ENCODE measurements at regions of chr5 and their contacts with region 1.

Region 1: GRCh38 chr5:36728697-36729543 is 122.5 kb downstream of the SLC1A3 start:
- DNase-seq: peak; percentile 67
- H3K4me3 Mint-ChIP-seq: no peak overlapping the region
- H3K27ac Mint-ChIP-seq: no peak overlapping the region
- H3K4me1 Mint-ChIP-seq: no peaks in the 10 kb centered on the region
- H3K27me3 Mint-ChIP-seq: no peaks in the 10 kb centered on the region
- CTCF ChIP-seq: peak; percentile 46

Region 2: GRCh38 chr5:36052538-36052937 is 676.4 kb before region 1 on chr5:
- CTCF ChIA-PET with region 1: no interaction called
- POLR2A ChIA-PET with region 1: no interaction called
- intact Hi-C with region 1: no loop called
- DNase-seq: no peak
- H3K4me3 Mint-ChIP-seq: no peak overlapping the region
- H3K27ac Mint-ChIP-seq: no peak overlapping the region
- H3K4me1 Mint-ChIP-seq: peaks cover 6% of the 10 kb centered on the region
- H3K27me3 Mint-ChIP-seq: peaks cover 13% of the 10 kb centered on the region
- CTCF ChIP-seq: no peak

Region 3: GRCh38 chr5:36397901-36398536 is 330.9 kb before region 1 on chr5:
- CTCF ChIA-PET with region 1: no interaction called
- POLR2A ChIA-PET with region 1: no interaction called
- intact Hi-C with region 1: no loop called
- DNase-seq: peak; percentile 47
- H3K4me3 Mint-ChIP-seq: no peak overlapping the region
- H3K27ac Mint-ChIP-seq: no peak overlapping the region
- H3K4me1 Mint-ChIP-seq: peaks cover 5% of the 10 kb centered on the region
- H3K27me3 Mint-ChIP-seq: no peaks in the 10 kb centered on the region
- CTCF ChIP-seq: peak; percentile 47

Region 4: DNA sequence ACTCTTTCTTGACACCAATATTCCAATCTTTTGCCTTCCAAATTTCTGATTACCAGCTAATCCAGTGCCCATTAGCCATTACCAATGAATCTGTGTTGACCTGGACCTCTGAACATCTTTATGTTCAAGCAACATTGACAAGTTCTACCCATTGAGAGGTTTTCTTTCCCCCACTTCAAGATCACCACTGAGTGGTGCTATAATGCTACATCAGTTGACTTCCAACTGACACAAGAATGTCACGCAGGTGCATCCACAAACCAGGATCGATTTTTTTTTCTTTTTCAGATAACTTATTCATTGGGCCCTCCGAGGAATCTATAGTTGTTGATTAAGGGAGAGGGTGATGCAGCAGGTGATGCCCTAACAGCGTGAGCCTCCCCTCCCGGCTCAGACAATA is 19.9 kb before region 1 on chr5:
- CTCF ChIA-PET with region 1: interaction called, 11 read pairs
- POLR2A ChIA-PET with region 1: no interaction called
- intact Hi-C with region 1: no loop called
- DNase-seq: no peak
- H3K4me3 Mint-ChIP-seq: no peak overlapping the region
- H3K27ac Mint-ChIP-seq: no peak overlapping the region
- H3K4me1 Mint-ChIP-seq: no peaks in the 10 kb centered on the region
- H3K27me3 Mint-ChIP-seq: no peaks in the 10 kb centered on the region
- CTCF ChIP-seq: no peak

Region 5: GRCh38 chr5:36739751-36740221 is 10.9 kb after region 1 on chr5:
- CTCF ChIA-PET with region 1: interaction called, 30 read pairs
- POLR2A ChIA-PET with region 1: interaction called, 4 read pairs
- intact Hi-C with region 1: no loop called
- DNase-seq: peak; percentile 77
- H3K4me3 Mint-ChIP-seq: no peak overlapping the region
- H3K27ac Mint-ChIP-seq: no peak overlapping the region
- H3K4me1 Mint-ChIP-seq: peaks cover 8% of the 10 kb centered on the region
- H3K27me3 Mint-ChIP-seq: peaks cover 15% of the 10 kb centered on the region
- CTCF ChIP-seq: peak; percentile 87

Region 6: DNA sequence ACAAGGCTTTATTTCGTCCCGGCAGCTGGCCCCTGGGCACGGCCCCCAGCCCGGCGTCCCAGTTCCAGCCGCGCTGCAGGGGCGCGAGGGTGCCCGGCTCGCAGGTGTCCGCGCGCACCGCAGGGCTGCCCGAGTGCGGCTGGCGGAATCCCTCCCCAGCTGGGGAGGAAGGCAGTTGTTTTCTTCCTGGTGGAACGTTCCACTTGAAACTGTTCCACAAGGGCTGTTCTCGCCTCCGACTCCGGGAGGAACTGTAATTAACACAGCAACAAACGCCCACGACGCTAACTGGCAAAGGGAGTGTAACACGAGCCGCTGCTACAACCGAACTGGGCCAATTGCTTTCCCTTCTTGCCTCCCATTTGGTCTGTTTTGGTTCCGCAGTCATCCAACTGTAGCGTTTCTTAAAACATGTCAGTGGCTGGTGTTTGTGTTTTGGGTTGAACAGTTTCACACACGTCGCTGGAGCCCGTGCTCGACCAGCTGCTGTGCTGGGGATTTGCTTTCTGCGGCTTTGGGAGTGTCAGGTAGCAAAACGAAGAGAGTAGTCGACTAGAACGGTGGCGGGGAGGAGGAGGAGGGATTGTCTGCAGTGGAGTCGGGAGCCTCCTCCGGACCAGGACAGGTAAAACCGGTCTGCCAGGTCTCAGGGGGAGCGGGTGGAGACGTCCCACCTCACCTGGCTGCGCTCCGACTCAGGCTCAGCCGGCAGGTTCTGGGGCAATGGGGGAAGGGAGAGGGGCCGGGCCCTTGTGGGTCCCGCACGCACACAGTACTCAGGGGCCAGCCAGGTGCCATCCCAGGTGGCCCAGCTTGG is 16.1 kb after region 1 on chr5:
- CTCF ChIA-PET with region 1: interaction called, 30 read pairs
- POLR2A ChIA-PET with region 1: interaction called, 4 read pairs
- intact Hi-C with region 1: no loop called
- DNase-seq: peak; percentile 72
- H3K4me3 Mint-ChIP-seq: peak overlapping the region; percentile 85
- H3K27ac Mint-ChIP-seq: peak overlapping the region; percentile 32
- H3K4me1 Mint-ChIP-seq: peaks cover 17% of the 10 kb centered on the region
- H3K27me3 Mint-ChIP-seq: peaks cover 28% of the 10 kb centered on the region
- CTCF ChIP-seq: no peak

Region 7: DNA sequence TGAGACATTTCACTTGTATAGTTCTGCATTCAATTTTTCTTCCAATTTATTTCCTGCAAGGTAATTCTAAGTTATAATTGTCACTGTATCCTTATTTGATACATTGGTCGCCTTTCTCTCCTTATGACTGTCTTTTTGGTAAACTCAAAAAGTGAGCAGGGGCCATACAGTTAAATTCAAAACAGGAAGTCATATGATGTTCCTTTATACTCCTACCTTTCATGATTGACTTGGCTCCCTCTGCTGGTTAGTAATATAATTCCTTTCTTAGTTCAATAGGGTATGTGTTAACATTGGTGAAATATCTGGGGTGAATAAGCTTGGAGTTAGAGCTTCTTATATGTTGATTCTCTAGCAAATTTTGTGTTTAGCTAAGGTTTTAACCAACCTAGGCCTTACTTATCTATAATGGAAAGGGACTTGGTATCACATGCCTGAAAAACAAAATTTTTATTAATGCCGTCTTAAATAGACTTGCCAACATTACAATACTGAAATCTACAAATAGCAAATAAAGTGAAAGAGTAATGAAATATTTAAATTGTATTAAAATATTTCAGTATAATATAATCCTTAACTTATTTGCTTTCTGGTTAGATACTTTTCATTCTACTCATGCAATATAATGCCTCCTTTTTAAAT is 141.6 kb after region 1 on chr5:
- CTCF ChIA-PET with region 1: interaction called, 57 read pairs
- POLR2A ChIA-PET with region 1: interaction called, 5 read pairs
- intact Hi-C with region 1: no loop called
- DNase-seq: peak; percentile 75
- H3K4me3 Mint-ChIP-seq: no peak overlapping the region
- H3K27ac Mint-ChIP-seq: no peak overlapping the region
- H3K4me1 Mint-ChIP-seq: peaks cover 20% of the 10 kb centered on the region
- H3K27me3 Mint-ChIP-seq: no peaks in the 10 kb centered on the region
- CTCF ChIP-seq: peak; percentile 65

Region 8: DNA sequence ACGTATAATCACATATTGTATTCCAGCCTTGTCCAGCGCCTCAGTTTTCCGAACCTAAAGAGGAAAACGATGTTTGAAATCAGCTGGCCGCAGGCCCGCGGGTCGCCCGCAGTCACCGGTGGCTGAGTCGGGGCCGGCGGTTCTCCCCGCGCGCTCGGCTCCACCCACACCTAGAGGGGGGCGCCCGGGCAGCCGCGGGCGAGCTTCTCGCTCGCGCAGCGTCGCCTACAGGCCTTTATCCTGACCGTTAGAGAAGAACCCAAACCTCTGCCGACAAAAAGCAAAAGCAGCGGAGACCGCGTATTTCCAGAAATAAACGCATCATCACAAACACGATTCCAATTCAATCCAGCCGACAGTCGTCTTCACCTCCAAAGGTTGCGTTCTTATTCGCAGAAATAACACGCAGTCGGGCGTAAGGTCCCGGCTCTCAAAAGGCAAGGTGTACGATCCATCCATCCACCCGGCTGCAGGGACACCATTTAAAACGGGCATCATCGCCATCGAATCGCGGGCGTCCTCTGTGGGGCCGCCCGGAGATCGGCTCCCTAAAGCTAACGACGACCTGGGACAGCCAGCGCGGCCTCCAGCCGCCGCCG is 147.0 kb after region 1 on chr5:
- CTCF ChIA-PET with region 1: interaction called, 57 read pairs
- POLR2A ChIA-PET with region 1: interaction called, 3 read pairs
- intact Hi-C with region 1: no loop called
- DNase-seq: peak; percentile 74
- H3K4me3 Mint-ChIP-seq: peak overlapping the region; percentile 93
- H3K27ac Mint-ChIP-seq: peak overlapping the region; percentile 97
- H3K4me1 Mint-ChIP-seq: peaks cover 21% of the 10 kb centered on the region
- H3K27me3 Mint-ChIP-seq: no peaks in the 10 kb centered on the region
- CTCF ChIP-seq: peak; percentile 31

Region 9: DNA sequence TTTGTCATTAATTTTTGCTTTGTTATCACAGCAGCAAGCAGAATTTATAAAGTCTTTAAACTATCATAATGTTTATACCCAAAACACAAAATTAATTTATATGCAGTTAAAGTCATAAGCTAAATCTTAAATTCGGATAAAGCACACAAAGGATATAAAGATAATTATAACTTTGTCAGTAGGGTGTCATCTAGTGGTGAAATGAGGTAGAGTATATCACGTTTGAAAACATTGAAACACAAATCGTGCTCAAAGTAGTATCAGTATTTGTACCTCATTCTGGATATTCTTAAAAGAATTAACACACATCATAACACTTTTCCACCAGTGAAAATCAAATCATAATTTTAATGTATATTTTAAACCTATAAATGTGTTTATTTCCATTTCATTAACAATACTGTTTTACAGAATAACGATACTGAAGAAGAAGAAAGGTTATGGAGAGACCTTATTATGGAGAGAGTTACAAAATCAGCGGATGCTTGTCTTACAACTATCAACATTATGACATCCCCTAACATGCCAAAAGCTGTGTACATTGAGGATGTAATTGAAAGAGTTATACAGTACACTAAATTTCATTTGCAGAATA is 277.1 kb after region 1 on chr5:
- CTCF ChIA-PET with region 1: interaction called, 40 read pairs
- POLR2A ChIA-PET with region 1: interaction called, 4 read pairs
- intact Hi-C with region 1: loop called (anchors 1 kb)
- DNase-seq: peak; percentile 23
- H3K4me3 Mint-ChIP-seq: no peak overlapping the region
- H3K27ac Mint-ChIP-seq: no peak overlapping the region
- H3K4me1 Mint-ChIP-seq: no peaks in the 10 kb centered on the region
- H3K27me3 Mint-ChIP-seq: no peaks in the 10 kb centered on the region
- CTCF ChIP-seq: peak; percentile 51